ENCODE measurements at regions of chr2 and their contacts with region 1.

Region 1: DNA sequence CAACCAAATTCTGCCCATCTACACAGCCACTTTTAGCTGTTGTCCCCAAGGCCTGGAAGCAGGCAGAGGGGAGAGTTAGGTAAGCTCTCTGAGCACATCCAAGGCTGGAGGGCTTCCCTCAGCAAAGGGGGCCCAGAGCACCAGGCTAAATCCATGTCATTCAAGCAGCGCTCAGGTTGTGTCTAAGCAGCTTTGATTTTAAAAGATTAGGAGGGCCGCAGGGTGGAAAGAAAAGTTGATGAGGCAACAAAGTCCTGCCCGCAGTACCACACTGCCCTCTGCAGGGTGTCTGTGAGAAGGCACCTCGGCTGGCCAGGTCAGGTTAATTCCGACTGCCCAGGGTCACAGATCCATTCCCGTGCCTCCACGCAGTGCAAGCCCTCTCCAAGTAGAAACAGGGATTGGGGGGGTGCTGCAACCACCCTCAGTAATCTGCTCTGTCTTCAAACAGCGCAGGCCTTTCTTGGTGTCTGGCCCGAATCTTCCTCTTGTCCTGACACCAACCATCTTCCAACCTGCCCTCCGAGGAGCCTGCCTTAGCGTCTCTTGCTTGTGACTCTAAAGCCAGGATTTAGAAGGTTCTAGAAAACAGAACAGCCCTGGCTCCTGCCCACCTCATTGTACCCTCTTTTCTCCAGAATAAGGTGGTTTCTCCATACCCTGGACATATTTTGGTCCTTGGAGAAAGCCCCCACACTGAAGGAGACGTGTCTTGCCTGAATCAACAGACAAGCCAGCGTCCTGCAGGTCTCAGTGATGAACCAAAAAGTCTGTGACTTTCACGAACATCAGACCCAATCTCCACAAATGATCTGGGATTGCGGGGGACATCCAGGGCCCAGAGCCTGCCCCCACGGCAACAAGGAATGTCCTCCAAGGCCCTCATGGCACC is 289.2 kb downstream of the TNS1 start:
- DNase-seq: no peak
- H3K4me3 ChIP-seq: no peak overlapping the region
- CTCF ChIP-seq: peak; percentile 95

Region 2: DNA sequence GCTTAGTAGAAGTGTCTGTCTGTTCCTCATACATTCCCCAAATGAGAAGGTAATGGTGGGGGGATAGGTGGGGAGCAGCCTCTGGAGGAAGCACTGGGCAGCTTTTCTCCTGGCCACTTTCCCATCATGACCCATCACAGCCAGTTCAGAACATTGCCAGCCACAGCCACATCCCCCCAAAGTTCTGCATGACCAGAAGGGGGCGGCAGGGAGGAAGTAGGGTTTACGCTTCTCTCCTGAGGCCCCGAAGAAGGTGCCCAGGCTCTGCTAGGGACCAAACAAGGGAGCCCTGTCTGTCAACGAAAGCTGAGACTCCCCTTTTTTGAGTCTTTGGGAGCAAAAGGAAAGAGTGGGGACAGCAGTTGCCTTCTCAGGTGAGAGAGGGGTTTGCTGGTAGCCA is 1026.0 kb before region 1 on chr2:
- CTCF ChIA-PET with region 1: interaction called, 48 read pairs
- POLR2A ChIA-PET with region 1: no interaction called
- DNase-seq: no peak
- H3K4me3 ChIP-seq: no peak overlapping the region
- CTCF ChIP-seq: peak; percentile 37

Region 3: GRCh38 chr2:217166241-217166850 is 547.3 kb before region 1 on chr2:
- CTCF ChIA-PET with region 1: interaction called, 13 read pairs
- POLR2A ChIA-PET with region 1: no interaction called
- DNase-seq: no peak
- H3K4me3 ChIP-seq: no peak overlapping the region
- CTCF ChIP-seq: peak; percentile 40

Region 4: GRCh38 chr2:217510771-217511291 is 202.8 kb before region 1 on chr2:
- CTCF ChIA-PET with region 1: interaction called, 102 read pairs
- POLR2A ChIA-PET with region 1: interaction called, 4 read pairs
- DNase-seq: no peak
- H3K4me3 ChIP-seq: no peak overlapping the region
- CTCF ChIP-seq: peak; percentile 78

Region 5: DNA sequence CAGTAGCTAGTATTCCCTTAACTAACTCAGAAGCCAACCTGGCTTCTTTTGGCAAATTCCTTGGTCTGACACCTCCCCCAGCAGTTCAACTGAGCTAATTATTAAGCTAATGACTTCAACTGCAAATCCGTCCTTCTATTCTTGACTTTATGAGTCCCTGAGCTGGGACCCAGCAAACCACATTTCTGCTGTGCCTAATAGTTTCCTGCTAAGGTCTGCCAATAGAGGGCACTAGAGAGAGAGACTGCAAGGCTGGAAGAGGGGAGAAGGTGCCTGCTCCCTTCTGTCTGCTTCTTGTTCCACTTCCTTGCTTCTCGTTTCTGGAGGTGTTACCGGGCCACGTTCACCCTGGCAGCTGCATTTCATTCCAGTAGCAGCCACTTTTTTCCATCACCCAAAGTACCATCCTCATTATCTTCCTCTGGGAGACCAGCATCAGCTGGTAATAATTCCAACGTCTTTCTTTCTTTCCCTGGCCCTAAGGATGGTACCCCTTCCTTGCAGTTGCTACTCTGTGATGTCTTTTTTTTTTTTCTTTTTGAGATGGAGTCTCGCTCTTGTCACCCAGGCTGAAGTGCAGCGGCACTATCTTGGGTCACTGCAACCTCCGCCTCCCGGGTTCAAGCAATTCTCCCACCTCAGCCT is 62.8 kb before region 1 on chr2:
- CTCF ChIA-PET with region 1: interaction called, 96 read pairs
- POLR2A ChIA-PET with region 1: no interaction called
- DNase-seq: no peak
- H3K4me3 ChIP-seq: no peak overlapping the region
- CTCF ChIP-seq: peak; percentile 81

Region 6: DNA sequence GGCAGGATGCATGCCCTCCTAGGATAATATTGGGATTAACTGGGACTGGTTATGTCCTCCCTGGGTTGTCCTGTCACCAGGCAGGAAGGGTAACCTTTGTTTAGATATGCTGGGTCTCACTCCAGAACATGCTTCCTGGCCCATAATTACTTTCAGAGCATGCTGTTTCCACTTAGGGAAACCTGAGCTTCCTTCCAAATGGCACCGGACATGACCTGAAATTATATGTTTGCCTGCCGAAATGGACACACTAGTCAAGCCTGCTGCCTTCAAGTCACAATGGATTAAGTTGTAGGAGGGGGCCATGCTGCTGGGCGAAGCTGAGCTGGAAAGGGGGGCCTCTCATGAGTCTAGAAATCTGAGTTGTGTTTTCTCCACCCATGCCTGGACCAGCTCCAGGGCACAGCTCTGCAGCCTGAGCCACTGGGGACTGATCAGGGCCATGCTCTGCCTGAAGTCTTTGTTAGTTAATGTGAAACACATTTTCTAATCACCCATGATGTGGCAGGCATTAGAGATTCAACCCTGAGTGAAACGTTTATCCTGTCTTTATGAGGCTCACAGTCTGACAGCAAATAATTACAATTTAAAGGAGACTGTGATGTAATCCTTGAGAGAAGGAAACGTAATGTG is 15.9 kb after region 1 on chr2:
- CTCF ChIA-PET with region 1: interaction called, 36 read pairs
- POLR2A ChIA-PET with region 1: interaction called, 6 read pairs
- DNase-seq: no peak
- H3K4me3 ChIP-seq: no peak overlapping the region
- CTCF ChIP-seq: no peak

Region 7: GRCh38 chr2:217864963-217865772 is 151.5 kb after region 1 on chr2:
- CTCF ChIA-PET with region 1: no interaction called
- POLR2A ChIA-PET with region 1: no interaction called
- DNase-seq: no peak
- H3K4me3 ChIP-seq: no peak overlapping the region
- CTCF ChIP-seq: no peak

Measured in AG04449 (cell line).